ENCODE measurements at regions of chr10 and their contacts with region 1.

Region 1: GRCh38 chr10:76558586-76558985 is 1079.0 kb downstream of the KCNMA1 start:
- DNase-seq: no peak
- H3K4me3 ChIP-seq: no peak overlapping the region
- H3K4me1 ChIP-seq: no peaks in the 10 kb centered on the region
- H3K27me3 ChIP-seq: no peaks in the 10 kb centered on the region

Region 2: GRCh38 chr10:76195654-76196390 is 362.8 kb before region 1 on chr10:
- in situ Hi-C with region 1: no loop called
- DNase-seq: peak in 1 of 2 experiments; percentile 14
- H3K4me3 ChIP-seq: no peak overlapping the region
- H3K4me1 ChIP-seq: no peaks in the 10 kb centered on the region
- H3K27me3 ChIP-seq: no peaks in the 10 kb centered on the region

Region 3: DNA sequence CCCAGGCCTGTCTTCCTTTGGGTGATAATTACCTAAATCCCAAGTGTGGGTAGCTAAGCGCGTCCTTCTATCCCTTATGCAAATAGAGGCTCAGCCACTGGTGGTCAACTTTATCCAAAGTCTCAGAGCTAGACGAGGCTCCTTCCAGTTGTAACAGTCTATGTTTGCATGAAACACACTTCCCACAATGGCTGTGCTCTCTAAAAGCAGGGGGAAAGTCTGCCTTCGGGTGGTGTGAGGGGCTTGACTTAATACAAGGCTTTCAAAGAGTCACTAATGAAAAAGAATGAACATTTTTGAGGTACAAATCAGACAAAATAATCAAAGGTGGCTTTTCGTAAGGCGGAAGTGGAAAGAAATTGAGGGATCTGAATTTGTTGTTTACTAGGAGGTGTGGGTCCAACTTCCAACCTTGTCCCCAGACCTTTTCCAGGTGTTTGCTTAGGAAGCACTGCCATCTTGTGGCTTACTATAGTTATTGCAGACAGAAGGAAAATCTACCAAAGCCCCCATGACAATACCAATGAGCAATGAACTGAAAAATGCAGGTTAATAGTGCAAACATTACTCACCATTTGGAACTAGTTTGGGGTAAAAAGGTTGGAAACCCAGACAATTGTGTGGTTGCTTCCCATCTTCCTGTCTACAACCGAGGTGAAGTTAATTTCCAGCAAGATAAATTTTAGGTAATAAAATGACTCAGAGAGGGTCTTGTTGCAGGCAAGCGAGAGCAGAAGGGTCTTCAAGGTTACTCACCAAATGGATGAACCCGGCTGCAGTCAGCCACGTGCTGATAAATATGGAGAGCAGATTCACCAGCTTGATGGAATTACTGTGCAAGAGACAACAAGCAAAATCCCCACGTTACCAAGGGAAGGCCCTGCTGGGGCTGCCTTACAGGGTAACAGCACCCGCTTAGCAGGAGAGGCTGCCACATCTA is 553.3 kb after region 1 on chr10:
- in situ Hi-C with region 1: loop called (anchors 25 kb)
- DNase-seq: peak; percentile 35 to 42
- H3K4me3 ChIP-seq: no peak overlapping the region
- H3K4me1 ChIP-seq: peaks cover 10% of the 10 kb centered on the region
- H3K27me3 ChIP-seq: peaks cover 2% of the 10 kb centered on the region; the same call in 1 of the 2 replicates

Measured in HAP-1 (cell line).